Posterior vena cava (tissue), 2 donors: ENCODE measurements at regions of chr17 and their contacts with region 1.

Region 1: GRCh38 chr17:15260376-15261257 is 4.5 kb downstream of the PMP22 start:
- DNase-seq: peak; percentile 97

Region 2: GRCh38 chr17:15236281-15237105 is 24.1 kb before region 1 on chr17:
- intact Hi-C with region 1: loop called in 1 of 2 experiments (anchors 2 kb)
- DNase-seq: no peak

Region 3: DNA sequence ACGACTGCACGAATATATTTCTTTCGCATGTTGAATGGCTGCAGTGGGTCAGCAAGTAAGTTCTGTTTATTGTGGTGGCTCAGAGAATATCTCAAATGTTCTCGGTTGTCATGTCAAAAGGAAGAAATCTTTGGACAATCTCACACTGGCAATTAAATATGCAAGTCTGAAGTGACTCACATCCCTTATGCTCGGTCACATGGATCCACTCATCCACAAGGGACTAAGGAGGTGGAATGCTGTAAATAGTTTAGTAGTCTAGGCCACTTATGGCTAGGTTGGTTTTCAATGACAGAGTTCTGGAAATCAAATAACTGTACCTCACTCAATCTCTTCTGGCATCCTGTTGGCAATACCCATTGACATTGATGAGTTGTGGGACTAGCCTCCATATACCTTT is 37.6 kb after region 1 on chr17:
- intact Hi-C with region 1: no loop called
- DNase-seq: no peak

Region 4: GRCh38 chr17:15351925-15352324 is 91.3 kb after region 1 on chr17:
- intact Hi-C with region 1: no loop called
- DNase-seq: no peak

Region 5: GRCh38 chr17:15398736-15399331 is 138.2 kb after region 1 on chr17:
- intact Hi-C with region 1: loop called in 1 of 2 experiments (anchors 10 kb)
- DNase-seq: peak; percentile 86

Region 6: GRCh38 chr17:15456972-15457722 is 196.5 kb after region 1 on chr17:
- intact Hi-C with region 1: loop called in 1 of 2 experiments (anchors 5 kb)
- DNase-seq: no peak

Region 7: DNA sequence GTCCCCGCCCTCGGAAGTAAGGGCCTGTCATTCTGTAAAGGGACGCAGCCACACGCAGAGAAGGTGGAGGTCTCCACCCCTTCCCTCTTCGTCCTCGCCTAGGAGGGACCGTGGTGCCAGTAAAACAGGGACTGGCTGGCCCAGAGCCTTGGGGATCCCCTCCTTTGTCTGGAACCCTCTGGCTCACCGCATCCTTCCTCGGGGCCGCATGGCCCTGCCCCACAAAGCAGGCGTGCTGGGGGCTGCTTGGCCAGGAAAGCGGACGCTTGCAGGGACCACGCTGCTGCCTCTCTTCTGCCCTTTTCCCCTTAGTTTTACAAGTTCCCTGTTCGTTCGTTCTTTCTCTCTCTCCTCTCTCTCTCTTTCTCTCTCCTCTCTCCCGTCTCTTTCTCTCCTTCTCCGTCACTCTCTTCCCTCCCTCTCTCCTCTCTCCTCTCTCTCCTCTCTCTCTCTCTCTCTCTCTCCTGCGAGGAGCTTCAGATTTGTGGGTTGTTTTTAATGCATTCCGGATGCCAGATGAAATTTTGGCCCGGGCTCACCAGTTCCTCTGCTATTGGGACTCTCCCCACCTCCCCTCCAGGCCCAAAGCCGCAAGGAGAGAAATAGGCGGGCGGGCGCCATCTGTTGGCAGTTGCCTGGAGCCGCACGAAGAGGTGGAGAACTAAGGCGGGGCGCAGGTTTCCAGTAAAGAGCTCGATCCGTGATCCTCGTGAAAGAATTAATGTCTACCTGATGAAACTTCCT is 241.9 kb after region 1 on chr17:
- intact Hi-C with region 1: loop called (anchors 2 kb)
- DNase-seq: peak; percentile 98